ENCODE measurements at regions of chr7 and their contacts with region 1.

Region 1: DNA sequence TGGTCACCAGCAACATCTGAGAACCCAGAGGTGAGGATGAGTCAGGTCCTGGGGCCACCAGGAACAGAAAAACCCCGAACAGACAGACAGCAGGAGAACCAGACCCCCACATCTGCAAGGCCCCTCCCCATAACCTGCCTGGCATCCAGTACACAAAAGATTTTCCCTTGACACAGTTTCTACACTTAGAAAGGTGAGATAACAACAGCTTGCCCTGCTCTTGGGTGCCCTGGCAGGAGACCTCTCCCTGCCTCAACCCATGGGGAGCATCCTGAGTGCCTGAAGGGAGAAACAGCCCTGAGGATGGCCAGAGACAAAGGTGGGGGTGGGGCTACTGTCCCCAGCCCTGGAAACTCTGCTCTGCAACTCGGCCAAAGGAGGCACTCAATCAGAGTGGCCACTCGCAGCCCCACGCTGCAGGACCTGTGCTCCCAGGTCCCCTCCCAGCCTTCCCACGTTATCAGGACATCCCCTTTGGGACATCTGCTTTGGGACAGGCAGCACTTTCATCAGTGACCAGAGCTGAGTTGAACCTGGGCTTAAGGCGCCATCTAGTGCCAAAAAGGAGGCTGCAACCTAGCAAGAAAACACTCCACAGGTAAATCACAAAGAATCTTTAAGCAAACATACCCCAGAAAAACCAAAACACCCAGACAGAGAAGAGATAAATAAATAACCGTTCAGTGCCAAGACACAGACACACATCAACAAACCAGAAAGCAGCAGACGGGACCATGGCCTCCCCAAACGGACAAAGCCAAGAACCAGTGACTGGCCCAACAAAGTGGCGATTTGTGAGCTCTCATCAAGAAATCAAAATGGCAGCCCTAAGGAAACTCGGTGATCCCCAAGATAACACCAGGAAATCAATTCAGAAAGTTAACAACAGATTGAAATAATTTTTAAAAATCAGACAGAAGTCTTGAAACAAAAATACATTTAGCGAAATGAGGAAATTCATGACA is 233.7 kb downstream of the PTPRN2 start:
- DNase-seq: no peak
- H3K4me3 ChIP-seq: no peak overlapping the region
- H3K27ac ChIP-seq: no peak overlapping the region
- H3K4me1 ChIP-seq: no peaks in the 10 kb centered on the region
- H3K27me3 ChIP-seq: peaks cover 0 to 20% (median 0%) of the 10 kb centered on the region in 4 donors
- CTCF ChIP-seq: peak in 5 of 6 experiments; percentile 32 to 67 (median 37)
- POLR2A ChIP-seq: no peak

Region 2: GRCh38 chr7:157432957-157433576 is 920.8 kb before region 1 on chr7:
- intact Hi-C with region 1: loop called (anchors 10 kb)
- DNase-seq: no peak
- H3K4me3 ChIP-seq: peak overlapping the region in 1 of 4 donors; percentile 20
- H3K27ac ChIP-seq: no peak overlapping the region
- H3K4me1 ChIP-seq: peaks cover 0 to 11% (median 4%) of the 10 kb centered on the region in 3 donors
- H3K27me3 ChIP-seq: peaks cover 0 to under 1% (median 0%) of the 10 kb centered on the region in 4 donors
- CTCF ChIP-seq: peak; percentile 33 to 73 (median 60)
- POLR2A ChIP-seq: no peak

Region 3: GRCh38 chr7:157464111-157464970 is 889.5 kb before region 1 on chr7:
- intact Hi-C with region 1: no loop called
- DNase-seq: no peak
- H3K4me3 ChIP-seq: no peak overlapping the region
- H3K27ac ChIP-seq: no peak overlapping the region
- H3K4me1 ChIP-seq: no peaks in the 10 kb centered on the region
- H3K27me3 ChIP-seq: peaks cover 0 to 65% (median 0%) of the 10 kb centered on the region in 4 donors
- CTCF ChIP-seq: no peak
- POLR2A ChIP-seq: no peak

Region 4: DNA sequence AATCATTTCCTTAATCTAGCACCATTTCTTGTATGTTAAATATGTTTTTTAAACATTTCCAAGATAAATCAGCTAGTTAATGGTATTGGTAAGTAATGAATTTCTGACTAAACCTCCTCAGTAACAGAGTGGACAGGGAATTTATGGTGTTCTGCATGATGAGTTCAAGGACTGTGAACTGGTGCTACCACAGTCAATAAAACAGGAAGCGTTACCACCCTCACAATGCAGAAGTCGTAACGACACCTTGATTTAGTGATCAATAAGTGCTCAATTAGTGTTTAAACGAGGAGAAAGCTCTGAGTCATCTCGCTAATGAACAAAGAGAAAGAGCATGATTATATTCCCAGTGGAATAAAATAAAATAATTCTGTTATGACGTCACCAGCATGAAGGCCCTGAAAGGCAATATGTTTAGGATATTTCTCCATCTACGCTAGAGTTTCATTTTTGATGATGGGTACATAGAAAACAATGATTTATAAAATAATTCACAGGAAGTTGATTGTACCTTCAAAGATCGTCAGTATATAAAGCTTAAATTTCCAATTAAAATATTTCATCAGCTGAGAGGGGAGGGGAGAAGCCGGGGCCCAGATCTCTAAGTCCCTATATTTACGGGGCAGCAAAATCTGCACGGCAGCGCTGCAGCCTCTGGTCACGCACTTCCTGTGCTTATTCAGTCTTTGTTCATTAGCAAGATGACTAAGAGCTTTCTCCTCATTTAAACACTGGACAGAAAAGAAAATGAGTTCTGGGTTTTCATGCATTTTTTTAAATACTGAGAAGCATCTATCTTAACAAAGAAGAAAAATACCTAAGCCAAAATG is 166.8 kb before region 1 on chr7:
- intact Hi-C with region 1: no loop called
- DNase-seq: no peak
- H3K4me3 ChIP-seq: no peak overlapping the region
- H3K27ac ChIP-seq: no peak overlapping the region
- H3K4me1 ChIP-seq: no peaks in the 10 kb centered on the region
- H3K27me3 ChIP-seq: no peaks in the 10 kb centered on the region
- CTCF ChIP-seq: no peak
- POLR2A ChIP-seq: no peak

Measured in esophagus squamous epithelium (tissue), 5 donors.